IMR-90 (cell line): ENCODE measurements at regions of chr3 and their contacts with region 1.

Region 1: GRCh38 chr3:194315088-194315964 is 35.8 kb downstream of the CPN2 start:
- DNase-seq: peak; percentile 63
- ATAC-seq: peak; percentile 94
- H3K4me3 ChIP-seq: peak overlapping the region; percentile 35
- H3K27ac ChIP-seq: no peak overlapping the region
- H3K4me1 ChIP-seq: peaks cover 3% of the 10 kb centered on the region; the same call in 1 of the 2 replicates
- H3K27me3 ChIP-seq: peaks cover 62% of the 10 kb centered on the region
- CTCF ChIP-seq: peak; percentile 96
- POLR2A ChIP-seq: peak; percentile 67; the same call in 1 of the 2 replicates
- RAD21 ChIP-seq: peak; percentile 99

Region 2: GRCh38 chr3:193465992-193466608 is 849.2 kb before region 1 on chr3:
- CTCF ChIA-PET with region 1: no interaction called
- POLR2A ChIA-PET with region 1: no interaction called
- dilution Hi-C with region 1: no loop called
- in situ Hi-C with region 1: no loop called
- intact Hi-C with region 1: loop called (anchors 2 kb)
- DNase-seq: no peak
- ATAC-seq: no peak
- H3K4me3 ChIP-seq: no peak overlapping the region
- H3K27ac ChIP-seq: no peak overlapping the region
- H3K4me1 ChIP-seq: no peaks in the 10 kb centered on the region
- H3K27me3 ChIP-seq: no peaks in the 10 kb centered on the region
- CTCF ChIP-seq: no peak
- POLR2A ChIP-seq: no peak
- RAD21 ChIP-seq: no peak

Region 3: DNA sequence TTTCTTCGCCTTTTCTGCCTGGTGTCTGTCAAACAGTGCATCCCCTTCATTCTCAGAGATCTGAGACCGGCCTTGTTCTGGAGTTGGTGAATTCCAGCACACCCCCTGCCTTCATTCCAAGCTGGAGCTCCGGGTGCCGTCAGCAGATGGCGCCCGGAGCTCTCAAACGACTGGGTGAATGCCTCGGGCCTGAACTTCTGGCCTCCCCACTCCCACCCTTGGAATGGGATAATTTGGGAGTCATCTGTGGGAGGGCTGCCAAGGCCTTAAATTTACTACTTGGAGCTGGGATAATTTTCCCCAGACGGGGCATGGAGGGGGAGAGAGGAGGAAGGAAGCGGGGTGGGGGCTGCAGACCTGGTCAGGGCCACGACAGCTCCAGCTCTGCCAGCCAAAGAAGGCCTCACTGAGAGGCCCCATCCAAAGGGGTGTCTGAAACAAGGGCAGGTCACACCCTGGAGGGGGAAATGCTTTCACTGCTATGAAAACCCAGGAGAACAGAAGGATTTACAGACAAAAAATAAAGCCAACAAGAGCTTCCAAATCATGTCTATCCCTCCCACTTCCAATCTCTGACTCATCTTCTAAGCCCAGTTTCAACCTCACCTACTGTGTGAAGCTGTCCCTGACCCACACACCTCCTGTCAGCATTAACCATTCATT is 534.4 kb before region 1 on chr3:
- CTCF ChIA-PET with region 1: interaction called, 83 read pairs
- POLR2A ChIA-PET with region 1: no interaction called
- dilution Hi-C with region 1: no loop called
- in situ Hi-C with region 1: loop called (anchors 5 kb)
- intact Hi-C with region 1: loop called (anchors 1 kb)
- DNase-seq: peak; percentile 54
- ATAC-seq: peak; percentile 92
- H3K4me3 ChIP-seq: no peak overlapping the region
- H3K27ac ChIP-seq: no peak overlapping the region
- H3K4me1 ChIP-seq: no peaks in the 10 kb centered on the region
- H3K27me3 ChIP-seq: peaks cover 50% of the 10 kb centered on the region
- CTCF ChIP-seq: peak; percentile 81
- POLR2A ChIP-seq: no peak
- RAD21 ChIP-seq: peak; percentile 86

Region 4: GRCh38 chr3:194003125-194004057 is 311.9 kb before region 1 on chr3:
- CTCF ChIA-PET with region 1: interaction called, 4 read pairs
- POLR2A ChIA-PET with region 1: no interaction called
- dilution Hi-C with region 1: no loop called
- in situ Hi-C with region 1: no loop called
- intact Hi-C with region 1: loop called (anchors 10 kb)
- DNase-seq: peak; percentile 87
- ATAC-seq: peak; percentile 97
- H3K4me3 ChIP-seq: peak overlapping the region; percentile 34
- H3K27ac ChIP-seq: no peak overlapping the region
- H3K4me1 ChIP-seq: peaks cover 8% of the 10 kb centered on the region; the same call in 1 of the 2 replicates
- H3K27me3 ChIP-seq: peaks cover 29% of the 10 kb centered on the region
- CTCF ChIP-seq: no peak
- POLR2A ChIP-seq: no peak; the same call in 1 of the 2 replicates
- RAD21 ChIP-seq: peak; percentile 23

Region 5: GRCh38 chr3:194134757-194135528 is 180.4 kb before region 1 on chr3:
- CTCF ChIA-PET with region 1: interaction called, 3 read pairs
- POLR2A ChIA-PET with region 1: no interaction called
- dilution Hi-C with region 1: no loop called
- in situ Hi-C with region 1: loop called (anchors 5 kb)
- intact Hi-C with region 1: loop called (anchors 1 kb)
- DNase-seq: peak; percentile 95
- ATAC-seq: peak; percentile 66
- H3K4me3 ChIP-seq: peak overlapping the region; percentile 59
- H3K27ac ChIP-seq: peak overlapping the region; percentile 76
- H3K4me1 ChIP-seq: peaks cover 7% of the 10 kb centered on the region
- H3K27me3 ChIP-seq: peaks cover 17% of the 10 kb centered on the region
- CTCF ChIP-seq: no peak
- POLR2A ChIP-seq: peak; percentile 69
- RAD21 ChIP-seq: no peak; the same call in none of the 2 replicates

Region 6: DNA sequence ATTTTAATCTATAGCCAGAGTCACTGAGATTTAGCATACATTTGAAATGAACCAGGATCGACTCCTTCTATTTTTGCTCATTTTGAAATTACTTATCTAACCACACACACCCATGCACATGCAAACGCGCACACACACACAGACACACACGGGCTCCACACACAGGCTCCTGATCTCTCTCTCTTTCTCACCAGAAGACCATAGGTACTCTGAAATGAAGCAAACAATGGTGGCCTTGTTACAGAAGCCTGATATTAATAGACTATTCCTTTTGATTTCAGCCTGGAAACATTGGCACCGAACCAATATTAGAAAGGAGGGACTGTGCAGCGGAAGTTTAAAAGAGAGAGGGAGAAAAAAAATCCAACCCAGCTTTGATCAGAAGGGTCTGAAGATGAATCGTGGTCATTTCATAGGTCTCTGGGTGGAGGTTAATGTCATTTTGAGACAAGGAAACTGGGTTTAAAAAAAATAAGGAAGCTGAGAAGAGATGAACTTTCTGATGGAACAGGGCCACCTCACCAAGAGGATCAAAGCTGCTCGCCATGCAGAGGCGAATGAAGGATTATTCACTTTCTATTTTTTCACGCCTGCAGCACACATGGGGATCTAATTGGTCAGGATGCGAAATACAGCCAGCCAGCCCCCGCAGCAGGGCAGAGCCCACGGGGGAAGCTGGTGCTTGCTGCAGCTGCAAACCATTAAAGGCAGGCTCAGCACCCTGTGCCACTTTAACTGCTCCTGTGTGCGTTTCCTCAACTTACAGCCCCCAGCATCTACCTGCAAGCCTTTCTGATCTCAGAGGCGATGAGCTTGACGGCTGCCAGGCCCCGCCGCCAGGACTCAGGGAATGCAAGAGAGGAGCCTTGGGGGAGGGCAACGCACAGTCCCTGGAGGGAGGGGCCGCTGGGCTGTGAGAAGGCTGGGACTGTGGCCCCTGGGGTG is 90.6 kb before region 1 on chr3:
- CTCF ChIA-PET with region 1: no interaction called
- POLR2A ChIA-PET with region 1: no interaction called
- dilution Hi-C with region 1: no loop called
- in situ Hi-C with region 1: no loop called
- intact Hi-C with region 1: no loop called
- DNase-seq: no peak
- ATAC-seq: no peak
- H3K4me3 ChIP-seq: no peak overlapping the region
- H3K27ac ChIP-seq: no peak overlapping the region
- H3K4me1 ChIP-seq: no peaks in the 10 kb centered on the region
- H3K27me3 ChIP-seq: peaks cover 33% of the 10 kb centered on the region
- CTCF ChIP-seq: no peak
- POLR2A ChIP-seq: no peak
- RAD21 ChIP-seq: no peak